Heart right ventricle (tissue), 16 donors: ENCODE measurements at regions of chr1 and their contacts with region 1.

Region 1: DNA sequence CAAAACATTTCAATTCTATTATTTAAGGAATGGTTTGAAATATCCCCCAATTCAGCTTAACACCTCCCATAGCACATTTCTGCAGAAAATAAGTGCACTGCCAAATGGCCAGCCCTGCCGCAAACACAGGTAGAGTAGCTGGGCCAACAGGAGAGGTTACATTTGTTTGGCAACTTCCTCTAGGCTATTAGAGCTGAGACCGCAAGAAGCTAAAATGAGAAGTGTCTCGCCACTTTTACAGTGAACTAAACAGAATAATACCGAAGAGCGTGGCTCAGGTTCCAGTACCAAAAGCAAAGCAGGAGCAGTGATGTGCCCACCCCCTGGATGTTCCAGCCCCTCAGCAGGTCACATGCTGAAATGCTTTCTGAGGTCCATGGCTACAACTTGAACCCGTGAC is 154.5 kb upstream of the PKN2 start:
- DNase-seq: no peak
- ATAC-seq: no peak
- H3K4me3 ChIP-seq: no peak overlapping the region
- H3K27ac ChIP-seq: no peak overlapping the region
- H3K4me1 ChIP-seq: no peaks in the 10 kb centered on the region
- H3K27me3 ChIP-seq: no peaks in the 10 kb centered on the region
- CTCF ChIP-seq: no peak

Region 2: DNA sequence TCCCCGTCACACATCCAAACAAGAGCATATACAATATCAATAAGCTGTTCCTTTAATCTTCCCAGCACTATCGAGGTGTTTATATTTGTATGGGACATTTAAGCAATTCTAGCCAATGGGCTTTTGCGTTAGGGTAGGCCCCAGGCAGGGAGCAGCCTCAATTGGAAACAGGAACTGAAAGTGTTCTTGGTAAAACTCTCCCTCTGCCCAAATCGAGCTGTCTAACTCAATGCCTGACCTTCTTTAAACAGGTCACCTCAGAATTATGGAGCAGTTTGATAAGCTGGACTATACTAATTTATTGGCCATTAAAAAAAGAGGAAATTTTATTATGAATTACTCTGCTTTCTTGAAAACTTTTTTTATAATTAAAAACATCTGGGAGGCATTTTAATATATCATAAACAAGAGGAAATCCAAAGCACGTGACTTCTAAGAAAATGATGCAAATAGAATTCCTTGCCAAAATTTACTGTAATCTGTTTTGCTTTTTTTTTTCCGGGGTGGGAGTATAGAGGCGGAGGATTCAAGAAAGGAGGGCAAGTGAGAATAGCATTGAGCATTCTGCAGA is 702.8 kb before region 1 on chr1:
- intact Hi-C with region 1: loop called in 1 of 10 experiments (anchors 5 kb)
- DNase-seq: peak; percentile 25 to 73
- ATAC-seq: peak; percentile 68 to 97 (median 93)
- H3K4me3 ChIP-seq: peak overlapping the region in 7 of 10 donors; percentile 0 to 47 (median 17)
- H3K27ac ChIP-seq: peak overlapping the region in 4 of 10 donors; percentile 31 to 75 (median 58)
- H3K4me1 ChIP-seq: peaks cover 0 to 27% (median 0%) of the 10 kb centered on the region in 9 donors
- H3K27me3 ChIP-seq: no peaks in the 10 kb centered on the region
- CTCF ChIP-seq: no peak

Region 3: DNA sequence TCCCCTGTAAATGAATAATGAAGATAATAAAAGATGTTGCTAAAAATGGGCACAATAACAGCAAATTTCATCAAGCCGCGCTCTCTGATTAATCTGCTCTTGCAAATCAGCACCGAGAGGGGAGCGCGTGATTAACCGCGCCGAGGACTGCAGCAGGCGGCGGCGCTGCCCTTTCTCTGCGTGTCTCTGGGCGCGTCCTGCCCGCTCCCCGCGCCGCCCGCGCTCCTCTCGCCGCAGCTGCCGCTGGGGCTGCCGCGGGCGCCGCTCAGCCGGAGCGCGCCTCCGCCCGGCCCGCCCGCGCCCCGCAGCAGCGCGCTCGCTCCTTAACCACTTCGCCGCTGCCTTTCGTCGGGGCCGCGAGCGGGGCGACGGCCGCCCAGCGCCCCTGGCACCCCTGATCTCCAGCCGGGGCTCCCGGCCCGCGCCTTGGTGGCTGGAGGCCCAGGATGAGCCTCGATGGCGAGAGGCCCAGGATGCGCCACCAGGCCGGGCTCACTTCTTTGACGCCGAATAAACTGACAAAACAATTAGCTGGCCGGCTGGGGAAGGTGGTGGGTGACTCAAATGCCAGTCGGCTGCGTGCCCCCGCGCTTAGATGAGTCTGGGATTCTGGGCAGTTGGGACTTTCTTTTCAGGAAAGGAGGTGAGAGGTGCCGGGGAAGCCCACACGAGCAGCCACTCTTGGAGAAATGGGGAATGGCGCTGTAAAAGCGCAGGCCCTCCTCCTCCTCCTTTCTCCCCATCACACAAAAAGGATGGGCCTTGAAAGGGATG is 66.9 kb before region 1 on chr1:
- intact Hi-C with region 1: loop called in 1 of 10 experiments (anchors 5 kb)
- DNase-seq: peak in 1 of 2 donors; percentile 34
- ATAC-seq: peak; percentile 38 to 94 (median 76)
- H3K4me3 ChIP-seq: peak overlapping the region in 9 of 10 donors; percentile 26 to 54 (median 47)
- H3K27ac ChIP-seq: peak overlapping the region in 9 of 10 donors; percentile 22 to 78 (median 69)
- H3K4me1 ChIP-seq: peaks cover 0 to 6% (median 0%) of the 10 kb centered on the region in 9 donors
- H3K27me3 ChIP-seq: peaks cover 0 to 36% (median 0%) of the 10 kb centered on the region in 7 donors
- CTCF ChIP-seq: peak in 2 of 9 donors; percentile 6